ENCODE measurements at regions of chr1 and their contacts with region 1.

Region 1: DNA sequence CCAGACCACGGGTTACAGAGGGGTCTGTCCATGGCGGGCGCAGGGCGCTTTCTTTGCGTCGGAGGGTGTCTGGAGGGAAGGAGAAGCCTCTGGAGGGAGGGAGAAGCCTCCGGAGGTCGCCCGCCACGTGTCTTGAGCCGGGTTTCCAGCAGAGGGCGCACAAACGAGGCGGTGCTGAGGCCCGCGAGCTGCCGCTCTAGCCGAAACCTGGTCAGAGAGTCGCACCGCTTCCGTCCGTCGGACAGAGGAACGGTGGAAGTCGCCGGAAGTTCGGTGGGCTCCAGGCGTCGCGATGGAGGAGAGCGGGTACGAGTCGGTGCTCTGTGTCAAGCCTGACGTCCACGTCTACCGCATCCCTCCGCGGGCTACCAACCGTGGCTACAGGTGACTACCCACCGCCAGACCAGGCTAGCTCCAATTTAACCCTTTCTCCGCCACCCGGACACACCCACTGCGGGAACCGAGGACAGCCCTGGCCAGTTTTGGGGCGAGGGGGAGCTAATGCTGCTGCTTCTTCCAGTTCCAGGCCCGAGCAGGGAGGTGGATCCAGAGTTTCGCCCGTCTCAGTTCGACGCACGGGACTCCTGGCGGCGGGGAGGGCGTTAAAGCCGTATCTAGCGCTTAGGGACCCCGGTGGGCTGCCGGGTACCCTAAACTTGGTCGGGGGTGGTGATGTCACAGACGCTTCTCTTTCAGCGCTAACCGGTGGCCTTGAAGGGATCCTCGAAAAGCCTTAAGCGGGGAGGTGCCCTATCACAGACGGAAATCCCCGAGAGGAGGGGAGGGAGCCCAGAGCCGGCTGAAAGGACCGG is at the start of gene NECAP2:
- DNase-seq: peak; percentile 95
- H3K4me3 ChIP-seq: peak within 1 kb of the TSS; percentile 79 to 92 (median 87)
- H3K27ac ChIP-seq: peak within 1 kb of the TSS; percentile 75 to 79 (median 78)
- H3K4me1 ChIP-seq: peaks cover 0 to 35% (median 24%) of the 10 kb centered on the region in 4 donors
- H3K27me3 ChIP-seq: no peaks in the 10 kb centered on the region
- CTCF ChIP-seq: peak; percentile 66 to 81 (median 77)
- EP300 ChIP-seq: peak in 1 of 4 donors; percentile 38
- POLR2A ChIP-seq: peak; percentile 37 to 39
- total RNA-seq, gene NECAP2: 22.8 to 38.0 (median 31.2) TPM

Region 2: GRCh38 chr1:15902882-15903281 is 537.8 kb before region 1 on chr1:
- intact Hi-C with region 1: no loop called
- DNase-seq: no peak
- H3K4me3 ChIP-seq: no peak overlapping the region
- H3K27ac ChIP-seq: peak overlapping the region in 1 of 4 donors; percentile 40
- H3K4me1 ChIP-seq: peaks cover 0 to 30% (median 17%) of the 10 kb centered on the region in 4 donors
- H3K27me3 ChIP-seq: no peaks in the 10 kb centered on the region
- CTCF ChIP-seq: no peak
- EP300 ChIP-seq: no peak
- POLR2A ChIP-seq: no peak

Region 3: DNA sequence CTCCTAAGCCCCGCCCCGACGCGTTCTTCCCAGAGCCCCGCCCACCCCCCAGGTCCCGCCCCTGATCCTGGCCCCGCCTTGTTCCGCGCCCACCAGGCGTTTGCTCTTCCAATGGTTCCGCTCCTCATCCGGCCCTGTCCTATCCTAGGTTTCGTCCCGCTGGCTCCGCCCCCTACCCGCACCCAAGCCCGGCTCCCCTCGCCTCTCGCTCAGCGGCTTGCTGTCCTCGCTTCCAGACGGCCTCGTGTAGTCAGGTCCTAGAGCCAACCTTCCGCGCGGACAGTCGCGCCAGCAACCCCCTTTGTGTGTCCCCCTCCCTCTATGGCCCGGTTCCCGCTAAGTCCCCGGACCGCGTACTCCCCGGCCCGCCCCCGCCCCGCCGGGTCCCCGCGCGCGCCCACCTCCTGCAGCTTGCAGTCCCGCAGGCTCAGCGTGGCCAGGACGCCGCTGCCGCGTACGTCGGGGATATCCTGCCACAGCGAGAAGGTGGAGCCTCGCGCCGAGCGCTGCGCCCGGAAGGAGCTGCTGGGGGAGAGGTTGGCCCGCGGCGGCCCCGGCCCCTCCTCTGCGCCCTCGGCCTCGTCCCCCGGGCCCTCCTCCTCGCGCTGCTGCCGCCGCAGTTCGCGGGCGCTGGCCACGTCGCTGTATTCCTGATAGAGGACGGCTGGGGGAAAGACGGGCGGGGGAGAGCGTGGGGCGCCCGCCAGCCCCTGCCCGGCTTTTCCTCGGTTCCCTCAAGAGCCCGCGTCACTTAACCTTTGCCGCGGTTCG is 233.9 kb before region 1 on chr1:
- intact Hi-C with region 1: loop called (anchors 5 kb)
- DNase-seq: peak; percentile 99
- H3K4me3 ChIP-seq: peak overlapping the region; percentile 37 to 60 (median 46)
- H3K27ac ChIP-seq: peak overlapping the region; percentile 85 to 97 (median 90)
- H3K4me1 ChIP-seq: peaks cover 0 to 20% (median 16%) of the 10 kb centered on the region in 4 donors
- H3K27me3 ChIP-seq: no peaks in the 10 kb centered on the region
- CTCF ChIP-seq: no peak
- EP300 ChIP-seq: no peak
- POLR2A ChIP-seq: peak in 1 of 2 donors; percentile 56

Region 4: DNA sequence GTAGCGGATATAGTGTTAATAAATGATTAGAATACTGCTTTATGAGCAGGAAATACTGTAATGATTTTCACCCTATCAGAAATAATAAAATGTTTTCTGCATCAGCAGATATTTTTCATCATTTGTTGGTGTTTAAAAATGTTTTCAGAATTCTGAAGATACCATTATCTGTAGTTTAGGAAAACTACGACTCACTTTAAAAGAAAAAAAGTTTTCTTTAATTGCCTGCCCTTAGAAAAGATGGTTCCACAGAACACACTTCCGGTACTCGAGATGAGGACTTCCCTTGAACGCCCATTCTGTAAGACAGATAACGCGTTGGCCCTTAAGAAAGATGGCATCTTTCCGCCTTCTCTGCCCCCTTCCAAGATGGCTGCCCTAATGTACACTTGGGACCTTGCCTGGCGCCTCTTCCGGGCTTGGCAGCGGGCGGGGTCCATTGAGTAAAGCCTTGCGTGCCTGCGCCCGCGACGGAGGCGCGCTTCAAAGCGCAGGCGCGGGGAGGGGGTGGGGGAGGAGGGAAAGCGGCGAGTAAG is 73.9 kb before region 1 on chr1 and contains the start of gene SZRD1:
- intact Hi-C with region 1: loop called (anchors 1 kb)
- DNase-seq: peak; percentile 99
- H3K4me3 ChIP-seq: peak within 1 kb of the TSS; percentile 64 to 92 (median 85)
- H3K27ac ChIP-seq: peak within 1 kb of the TSS; percentile 92 to 98 (median 94)
- H3K4me1 ChIP-seq: peaks cover 0 to 46% (median 39%) of the 10 kb centered on the region in 4 donors
- H3K27me3 ChIP-seq: no peaks in the 10 kb centered on the region
- CTCF ChIP-seq: no peak
- EP300 ChIP-seq: no peak
- POLR2A ChIP-seq: no peak
- total RNA-seq, gene SZRD1: 65.0 to 77.3 (median 68.1) TPM

Region 5: GRCh38 chr1:16386454-16387113 is 54.1 kb before region 1 on chr1:
- intact Hi-C with region 1: loop called (anchors 5 kb)
- DNase-seq: peak; percentile 71
- H3K4me3 ChIP-seq: peak overlapping the region in 2 of 4 donors; percentile 39 to 44
- H3K27ac ChIP-seq: peak overlapping the region; percentile 73 to 86 (median 76)
- H3K4me1 ChIP-seq: peaks cover 0 to 67% (median 59%) of the 10 kb centered on the region in 4 donors
- H3K27me3 ChIP-seq: no peaks in the 10 kb centered on the region
- CTCF ChIP-seq: no peak
- EP300 ChIP-seq: no peak
- POLR2A ChIP-seq: no peak

Region 6: DNA sequence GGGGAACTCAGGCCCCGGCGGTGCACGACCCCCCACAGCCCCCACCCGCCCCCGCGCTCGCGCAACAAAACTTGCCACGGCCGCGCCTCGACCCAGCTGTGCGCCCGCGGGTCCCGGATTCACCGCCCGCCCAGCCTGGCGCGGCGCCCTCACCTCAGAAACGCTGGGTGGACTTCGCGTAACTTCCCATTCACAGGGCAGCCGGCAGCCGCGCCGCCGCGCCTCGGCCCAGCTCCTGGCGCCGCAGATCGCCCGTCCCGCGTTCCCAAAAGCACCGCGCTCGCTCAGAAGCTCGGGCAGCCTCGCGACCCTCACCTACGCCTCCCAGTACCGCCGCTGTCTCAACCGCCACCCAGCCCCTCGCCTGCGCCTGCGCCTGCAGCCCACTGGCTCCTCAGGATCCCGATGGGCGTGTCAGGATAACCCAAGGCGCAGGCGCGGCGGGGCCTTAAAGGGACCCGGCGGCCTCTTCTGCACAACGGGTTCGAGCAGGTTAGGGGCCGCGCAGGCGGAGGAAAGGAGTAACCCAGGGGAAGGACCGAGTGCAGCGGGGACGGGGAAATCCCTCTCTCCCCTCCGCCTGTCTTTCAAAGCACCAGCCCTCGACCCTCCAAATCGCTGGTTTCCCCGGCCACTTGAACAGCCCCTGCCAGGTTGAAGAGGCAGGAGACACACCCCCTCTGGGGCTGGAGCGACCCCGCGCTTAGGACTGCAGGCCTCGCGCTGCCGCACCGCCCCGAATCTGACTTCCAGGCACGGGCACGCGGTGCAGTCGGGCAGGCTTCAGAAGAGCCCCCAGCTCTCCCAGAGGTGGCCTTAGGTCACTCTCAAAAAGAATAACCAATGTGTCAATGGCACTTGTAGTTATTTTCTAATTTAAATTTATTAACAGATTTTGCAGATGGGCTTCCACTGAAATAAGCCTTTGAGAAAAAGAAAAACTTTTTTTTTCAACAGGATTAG is 172.8 kb after region 1 on chr1 and contains the start of gene NBPF1:
- intact Hi-C with region 1: loop called (anchors 10 kb)
- DNase-seq: peak; percentile 99
- H3K4me3 ChIP-seq: peak within 1 kb of the TSS; percentile 51 to 65 (median 55)
- H3K27ac ChIP-seq: peak within 1 kb of the TSS; percentile 76 to 84 (median 80)
- H3K4me1 ChIP-seq: peaks cover 0 to 24% (median 21%) of the 10 kb centered on the region in 4 donors
- H3K27me3 ChIP-seq: no peaks in the 10 kb centered on the region
- CTCF ChIP-seq: no peak
- EP300 ChIP-seq: peak in 2 of 4 donors; percentile 10 to 57
- POLR2A ChIP-seq: peak; percentile 75 to 89
- total RNA-seq, gene NBPF1: 30.3 to 80.9 (median 37.2) TPM

Measured in sigmoid colon (tissue), 7 donors.